ENCODE measurements at regions of chr1 and their contacts with region 1.

Region 1: DNA sequence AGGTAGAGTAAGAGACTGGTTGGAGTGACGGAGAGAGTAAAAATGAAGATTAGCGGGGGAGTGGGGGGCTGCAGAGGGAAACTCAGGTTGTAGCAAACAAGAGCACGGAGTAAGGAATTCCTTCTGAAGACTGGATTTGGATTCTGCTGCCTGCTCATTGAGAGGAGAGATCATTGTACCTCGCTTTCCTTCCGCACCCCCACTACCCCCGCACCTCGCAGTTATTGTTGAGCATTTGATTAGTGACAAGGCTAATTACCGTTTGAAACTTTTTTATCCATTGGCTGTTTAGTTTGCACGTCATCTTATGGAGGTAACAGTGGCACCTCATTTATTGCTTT is 463 bp downstream of the PRPF3 start:
- DNase-seq: no peak
- H3K4me3 Mint-ChIP-seq: peak overlapping the region; percentile 99
- H3K27ac Mint-ChIP-seq: peak overlapping the region; percentile 98
- H3K4me1 Mint-ChIP-seq: peaks cover 28% of the 10 kb centered on the region
- H3K27me3 Mint-ChIP-seq: peaks cover 1% of the 10 kb centered on the region

Region 2: GRCh38 chr1:149899460-149900293 is 422.1 kb before region 1 on chr1 and contains the start of gene BOLA1:
- intact Hi-C with region 1: loop called (anchors 1 kb)
- DNase-seq: peak; percentile 77
- H3K4me3 Mint-ChIP-seq: peak within 1 kb of the TSS; percentile 86
- H3K27ac Mint-ChIP-seq: peak within 1 kb of the TSS; percentile 92
- H3K4me1 Mint-ChIP-seq: peaks cover 27% of the 10 kb centered on the region
- H3K27me3 Mint-ChIP-seq: peaks cover 2% of the 10 kb centered on the region
- total RNA-seq, gene BOLA1: 23.9 and 24.3 TPM in 2 replicates

Region 3: DNA sequence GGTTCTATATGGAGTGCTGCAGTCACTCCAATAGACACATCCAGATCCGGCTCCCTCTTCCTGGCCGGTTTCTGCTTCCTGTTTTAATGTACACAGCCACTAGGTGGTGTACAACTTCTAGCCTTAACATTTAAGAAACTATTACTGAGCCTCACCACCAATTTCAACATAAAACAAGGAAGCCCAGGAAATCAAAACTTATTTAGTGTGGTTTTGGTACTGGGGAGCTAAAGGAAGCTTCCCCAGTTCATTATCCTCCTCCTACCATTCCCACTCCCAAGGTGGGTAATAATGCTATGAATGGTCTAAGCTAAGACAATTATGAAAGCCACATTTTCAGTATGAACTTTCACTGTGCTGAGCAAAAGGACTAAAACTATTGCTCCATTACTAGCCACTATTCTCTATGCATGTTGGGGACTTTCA is 359.7 kb before region 1 on chr1:
- intact Hi-C with region 1: no loop called
- DNase-seq: peak; percentile 29
- H3K4me3 Mint-ChIP-seq: no peak overlapping the region
- H3K27ac Mint-ChIP-seq: peak overlapping the region; percentile 11
- H3K4me1 Mint-ChIP-seq: peaks cover 21% of the 10 kb centered on the region
- H3K27me3 Mint-ChIP-seq: no peaks in the 10 kb centered on the region

Region 4: DNA sequence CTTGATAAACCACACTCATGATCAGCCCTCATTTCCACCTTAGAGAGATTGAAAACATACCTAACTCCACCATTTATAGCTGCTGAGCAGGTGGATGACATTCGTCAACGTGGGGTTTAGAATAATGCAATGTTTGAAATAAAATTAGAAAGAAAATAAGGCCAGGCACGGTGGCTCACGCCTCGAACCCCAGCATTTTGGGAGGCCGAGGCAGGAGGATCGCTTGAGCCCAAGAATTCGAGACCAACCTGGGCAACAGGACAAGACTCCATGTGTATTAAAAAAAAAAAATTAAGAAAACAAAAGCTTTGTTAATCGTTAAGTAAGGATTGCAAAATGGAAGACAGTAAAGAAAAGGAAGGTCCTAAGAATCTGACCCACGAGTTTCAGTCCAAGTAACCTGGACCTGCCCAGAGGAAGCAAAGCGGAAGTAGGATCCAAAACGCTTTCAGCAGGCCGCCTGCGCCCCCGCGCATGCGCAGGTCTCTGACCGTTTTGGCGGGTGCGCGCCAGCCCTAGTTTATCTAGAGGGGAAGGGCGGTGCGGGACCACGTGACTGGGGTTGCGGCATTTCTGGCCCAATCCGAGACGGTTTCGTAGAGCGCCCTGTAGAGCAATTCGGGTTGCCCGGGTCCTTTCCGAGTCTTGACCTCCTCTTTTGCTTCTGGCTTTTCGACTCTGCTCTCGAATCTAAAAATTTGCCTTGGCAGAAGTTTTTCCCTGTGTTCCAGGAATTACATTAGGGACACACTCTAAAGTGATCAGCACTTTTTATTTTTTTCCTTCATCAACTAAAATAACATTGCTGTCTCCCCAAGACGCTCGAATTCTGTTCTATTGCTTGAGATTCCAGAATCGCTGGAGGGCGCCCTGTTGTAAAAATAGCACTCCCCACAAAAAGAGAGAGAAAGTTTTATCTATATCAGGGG is 108.4 kb before region 1 on chr1:
- intact Hi-C with region 1: loop called (anchors 5 kb)
- DNase-seq: peak; percentile 87
- H3K4me3 Mint-ChIP-seq: peak overlapping the region; percentile 90
- H3K27ac Mint-ChIP-seq: peak overlapping the region; percentile 94
- H3K4me1 Mint-ChIP-seq: peaks cover 19% of the 10 kb centered on the region
- H3K27me3 Mint-ChIP-seq: peaks cover 2% of the 10 kb centered on the region

Region 5: GRCh38 chr1:150268705-150269403 is 52.9 kb before region 1 on chr1 and contains the start of gene APH1A:
- intact Hi-C with region 1: loop called (anchors 1 kb)
- DNase-seq: peak; percentile 94
- H3K4me3 Mint-ChIP-seq: peak within 1 kb of the TSS; percentile 93
- H3K27ac Mint-ChIP-seq: peak within 1 kb of the TSS; percentile 85
- H3K4me1 Mint-ChIP-seq: peaks cover 30% of the 10 kb centered on the region
- H3K27me3 Mint-ChIP-seq: peaks cover 3% of the 10 kb centered on the region
- total RNA-seq, gene APH1A: 102 and 111 TPM in 2 replicates

Region 6: GRCh38 chr1:150293433-150294168 is 28.2 kb before region 1 on chr1 and contains the start of gene MRPS21:
- intact Hi-C with region 1: loop called (anchors 1 kb)
- DNase-seq: peak; percentile 85
- H3K4me3 Mint-ChIP-seq: peak within 1 kb of the TSS; percentile 93
- H3K27ac Mint-ChIP-seq: peak within 1 kb of the TSS; percentile 98
- H3K4me1 Mint-ChIP-seq: peaks cover 24% of the 10 kb centered on the region
- H3K27me3 Mint-ChIP-seq: no peaks in the 10 kb centered on the region
- total RNA-seq, gene MRPS21: 81.4 and 85.2 TPM in 2 replicates

Region 7: DNA sequence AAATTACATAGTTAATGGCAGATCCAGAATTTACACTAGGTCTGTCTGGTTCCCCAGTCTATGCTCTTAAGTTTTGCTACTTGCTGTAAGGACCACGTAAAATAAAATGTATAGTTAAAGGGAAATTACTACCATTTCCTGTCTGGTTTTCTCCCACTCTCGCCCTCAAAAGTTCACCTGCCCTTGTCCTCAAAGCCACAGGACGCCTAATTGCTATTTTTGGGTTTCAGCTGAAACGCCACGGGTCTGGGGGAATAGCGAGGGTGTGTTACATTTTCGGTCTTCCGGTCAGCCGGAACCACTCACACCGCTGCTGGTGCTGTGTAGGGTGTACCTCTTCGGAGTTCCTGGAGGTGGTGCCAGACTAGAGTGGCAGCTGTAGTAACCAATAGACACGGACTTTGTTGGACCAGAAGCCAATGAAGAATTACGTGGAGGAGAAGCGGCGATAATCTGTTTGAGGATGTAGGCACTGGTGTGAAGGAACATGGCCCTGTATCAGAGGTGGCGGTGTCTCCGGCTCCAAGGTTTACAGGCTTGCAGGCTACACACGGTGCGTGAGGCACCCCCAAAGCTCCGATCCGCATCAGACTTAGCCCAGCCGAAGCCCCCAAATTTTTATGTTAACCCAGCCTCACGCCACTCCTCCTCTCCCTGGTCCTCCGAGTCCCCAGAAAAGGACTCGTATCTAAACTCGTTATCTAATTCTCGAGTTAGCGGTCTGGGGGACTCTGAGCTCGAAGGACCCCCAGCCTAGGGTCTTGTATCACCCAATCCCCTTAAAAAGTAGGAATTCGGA is 165.4 kb after region 1 on chr1 and contains the start of gene TARS2:
- intact Hi-C with region 1: loop called (anchors 1 kb)
- DNase-seq: peak; percentile 94
- H3K4me3 Mint-ChIP-seq: peak within 1 kb of the TSS; percentile 98
- H3K27ac Mint-ChIP-seq: peak within 1 kb of the TSS; percentile 95
- H3K4me1 Mint-ChIP-seq: peaks cover 35% of the 10 kb centered on the region
- H3K27me3 Mint-ChIP-seq: no peaks in the 10 kb centered on the region
- total RNA-seq, gene TARS2: 77.3 and 77.4 TPM in 2 replicates

Region 8: GRCh38 chr1:150516049-150516591 is 194.3 kb after region 1 on chr1:
- intact Hi-C with region 1: no loop called
- DNase-seq: no peak
- H3K4me3 Mint-ChIP-seq: peak overlapping the region; percentile 79
- H3K27ac Mint-ChIP-seq: peak overlapping the region; percentile 1
- H3K4me1 Mint-ChIP-seq: peaks cover 18% of the 10 kb centered on the region
- H3K27me3 Mint-ChIP-seq: no peaks in the 10 kb centered on the region

Region 9: GRCh38 chr1:150537732-150538684 is 216.2 kb after region 1 on chr1:
- intact Hi-C with region 1: no loop called
- DNase-seq: no peak
- H3K4me3 Mint-ChIP-seq: no peak overlapping the region
- H3K27ac Mint-ChIP-seq: no peak overlapping the region
- H3K4me1 Mint-ChIP-seq: no peaks in the 10 kb centered on the region
- H3K27me3 Mint-ChIP-seq: no peaks in the 10 kb centered on the region

Region 10: GRCh38 chr1:150683914-150684313 is 362.1 kb after region 1 on chr1:
- intact Hi-C with region 1: no loop called
- DNase-seq: no peak
- H3K4me3 Mint-ChIP-seq: no peak overlapping the region
- H3K27ac Mint-ChIP-seq: no peak overlapping the region
- H3K4me1 Mint-ChIP-seq: peaks cover 10% of the 10 kb centered on the region
- H3K27me3 Mint-ChIP-seq: no peaks in the 10 kb centered on the region

Measured in activated T-helper 1 cell treated with anti-CD3 and anti-CD28 coated beads, Interleukin-12 subunit alpha, Interleukin-12 subunit beta, Interleukin-2, Interleukin-4 antibody, amounts not matched to agents 30 ng/mL and 10 ng/mL and 1 ng/mL, durations not matched to agents 14 hours and 24 hours and 36 hours (primary cell).